Activated CD4-positive, alpha-beta T cell treated with anti-CD3 and anti-CD28 coated beads, Interleukin-2, amount 10 ng/mL, durations not matched to agents 24 days and 14 days (primary cell): ENCODE measurements at regions of chr4 and their contacts with region 1.

Region 1: DNA sequence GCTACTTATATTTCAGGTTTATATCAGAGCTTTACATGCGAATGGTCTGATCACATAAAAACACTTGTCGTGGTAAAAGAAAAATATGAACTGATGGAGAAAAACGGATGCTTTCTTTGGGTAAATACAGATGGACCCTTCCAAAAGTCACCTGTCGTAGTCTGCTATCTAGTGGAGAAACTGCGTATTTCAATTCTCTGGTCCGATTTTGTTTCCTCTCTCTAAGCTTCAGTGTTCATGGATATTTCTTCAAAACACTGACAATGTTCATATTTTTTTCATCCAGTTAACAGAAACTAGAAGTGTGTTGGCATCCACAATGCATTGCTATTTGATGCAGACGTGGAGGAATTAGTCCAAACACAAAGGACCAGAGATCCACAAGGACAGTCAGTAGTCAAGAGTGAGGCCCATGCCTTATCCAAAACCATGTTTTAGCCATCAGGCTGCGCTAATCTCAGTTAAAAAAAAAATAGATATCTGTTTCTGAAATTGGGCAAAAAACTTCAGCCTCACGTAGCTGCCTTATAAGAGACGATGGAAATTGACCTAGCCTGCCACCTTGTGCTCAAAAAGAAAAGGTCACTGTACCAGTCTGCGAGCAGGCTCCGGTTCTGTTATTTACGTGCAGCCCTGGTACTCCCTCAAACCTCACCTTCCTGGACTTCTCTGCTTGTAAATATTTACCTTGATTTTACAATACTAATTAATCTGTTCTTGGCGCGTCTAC is 16.0 kb downstream of the MEPE start:
- DNase-seq: peak; percentile 79
- H3K4me3 Mint-ChIP-seq: peak overlapping the region; percentile 7
- H3K27ac Mint-ChIP-seq: no peak overlapping the region
- H3K4me1 Mint-ChIP-seq: peaks cover 8% of the 10 kb centered on the region
- H3K27me3 Mint-ChIP-seq: peaks cover 21% of the 10 kb centered on the region

Region 2: GRCh38 chr4:87375719-87376291 is 473.0 kb before region 1 on chr4:
- intact Hi-C with region 1: loop called (anchors 10 kb)
- DNase-seq: peak; percentile 62
- H3K4me3 Mint-ChIP-seq: no peak overlapping the region
- H3K27ac Mint-ChIP-seq: no peak overlapping the region
- H3K4me1 Mint-ChIP-seq: no peaks in the 10 kb centered on the region
- H3K27me3 Mint-ChIP-seq: no peaks in the 10 kb centered on the region

Region 3: DNA sequence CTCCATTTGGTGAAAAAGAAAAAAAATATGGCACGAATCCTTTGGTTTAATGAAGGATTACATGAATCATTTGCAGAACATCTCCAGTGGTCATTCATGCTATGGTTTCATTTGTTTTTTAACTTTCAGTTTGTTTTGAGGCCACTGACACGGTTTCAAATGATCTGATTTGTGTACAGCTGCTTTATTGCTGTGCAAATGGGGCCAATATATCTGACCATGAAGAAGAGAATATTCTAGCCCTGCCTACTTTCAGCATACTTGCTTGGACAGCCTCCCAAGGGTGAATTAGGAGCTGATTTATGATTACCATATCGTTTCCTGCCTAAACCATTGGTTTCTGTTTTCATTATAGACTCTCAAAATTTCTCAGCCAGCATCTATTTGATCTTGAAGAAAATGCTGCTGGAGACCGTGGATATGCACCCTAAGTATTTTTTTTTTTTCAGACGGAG is 350.3 kb before region 1 on chr4:
- intact Hi-C with region 1: loop called (anchors 5 kb)
- DNase-seq: no peak
- H3K4me3 Mint-ChIP-seq: no peak overlapping the region
- H3K27ac Mint-ChIP-seq: no peak overlapping the region
- H3K4me1 Mint-ChIP-seq: peaks cover 8% of the 10 kb centered on the region
- H3K27me3 Mint-ChIP-seq: peaks cover 6% of the 10 kb centered on the region

Region 4: GRCh38 chr4:87679449-87680169 is 169.2 kb before region 1 on chr4:
- intact Hi-C with region 1: loop called (anchors 2 kb)
- DNase-seq: peak; percentile 64
- H3K4me3 Mint-ChIP-seq: no peak overlapping the region
- H3K27ac Mint-ChIP-seq: no peak overlapping the region
- H3K4me1 Mint-ChIP-seq: no peaks in the 10 kb centered on the region
- H3K27me3 Mint-ChIP-seq: no peaks in the 10 kb centered on the region

Region 5: GRCh38 chr4:87716371-87717265 is 132.2 kb before region 1 on chr4:
- intact Hi-C with region 1: no loop called
- DNase-seq: no peak
- H3K4me3 Mint-ChIP-seq: no peak overlapping the region
- H3K27ac Mint-ChIP-seq: no peak overlapping the region
- H3K4me1 Mint-ChIP-seq: no peaks in the 10 kb centered on the region
- H3K27me3 Mint-ChIP-seq: peaks cover 1% of the 10 kb centered on the region

Region 6: DNA sequence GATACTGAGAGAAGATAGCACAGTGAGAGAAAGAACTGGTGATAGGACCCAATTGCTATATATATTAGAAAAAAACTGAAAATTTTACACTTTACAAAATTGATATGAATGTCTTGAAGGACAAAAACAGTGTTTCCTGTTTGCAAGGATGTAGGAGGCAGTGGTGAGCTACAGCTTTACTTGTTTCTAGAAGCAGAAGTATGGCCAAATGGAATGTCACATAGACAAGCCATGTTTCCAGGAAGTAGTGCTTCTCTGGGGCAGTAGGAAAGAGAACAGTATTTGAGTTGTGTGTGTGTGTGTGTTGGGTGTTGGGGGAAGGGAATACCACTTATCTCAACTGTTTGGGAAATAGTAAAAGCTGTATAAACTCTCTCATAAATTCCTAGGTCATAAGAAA is 110.3 kb before region 1 on chr4:
- intact Hi-C with region 1: no loop called
- DNase-seq: no peak
- H3K4me3 Mint-ChIP-seq: no peak overlapping the region
- H3K27ac Mint-ChIP-seq: no peak overlapping the region
- H3K4me1 Mint-ChIP-seq: no peaks in the 10 kb centered on the region
- H3K27me3 Mint-ChIP-seq: no peaks in the 10 kb centered on the region

Region 7: GRCh38 chr4:87973283-87974169 is 124.7 kb after region 1 on chr4:
- intact Hi-C with region 1: loop called (anchors 1 kb)
- DNase-seq: peak; percentile 77
- H3K4me3 Mint-ChIP-seq: no peak overlapping the region
- H3K27ac Mint-ChIP-seq: no peak overlapping the region
- H3K4me1 Mint-ChIP-seq: peaks cover 4% of the 10 kb centered on the region
- H3K27me3 Mint-ChIP-seq: peaks cover 49% of the 10 kb centered on the region

Region 8: GRCh38 chr4:88211473-88212252 is 362.9 kb after region 1 on chr4:
- intact Hi-C with region 1: loop called (anchors 1 kb)
- DNase-seq: peak; percentile 89
- H3K4me3 Mint-ChIP-seq: no peak overlapping the region
- H3K27ac Mint-ChIP-seq: no peak overlapping the region
- H3K4me1 Mint-ChIP-seq: peaks cover 5% of the 10 kb centered on the region
- H3K27me3 Mint-ChIP-seq: peaks cover 13% of the 10 kb centered on the region

Region 9: DNA sequence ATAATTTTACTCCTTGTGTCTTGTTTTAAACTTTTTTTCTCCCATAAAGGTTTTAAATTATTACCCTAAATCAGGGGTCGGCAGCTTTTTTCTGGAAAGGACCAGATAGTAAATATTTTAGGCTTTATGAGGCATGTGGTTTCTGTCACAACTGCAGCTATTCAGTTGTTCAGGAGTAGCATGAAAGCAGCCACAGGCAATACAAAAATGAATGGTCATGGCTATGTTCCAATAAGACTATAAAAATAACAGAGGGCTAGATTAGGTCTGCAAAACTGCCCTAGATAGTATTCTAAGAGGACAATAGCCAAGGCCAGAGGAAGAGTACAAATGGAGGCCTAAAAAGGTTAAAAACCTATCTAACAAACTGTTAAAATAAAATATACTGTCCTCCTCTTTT is 632.8 kb after region 1 on chr4:
- intact Hi-C with region 1: no loop called
- DNase-seq: no peak
- H3K4me3 Mint-ChIP-seq: no peak overlapping the region
- H3K27ac Mint-ChIP-seq: no peak overlapping the region
- H3K4me1 Mint-ChIP-seq: no peaks in the 10 kb centered on the region
- H3K27me3 Mint-ChIP-seq: no peaks in the 10 kb centered on the region

Region 10: GRCh38 chr4:88514557-88515511 is 666.0 kb after region 1 on chr4:
- intact Hi-C with region 1: loop called (anchors 10 kb)
- DNase-seq: no peak
- H3K4me3 Mint-ChIP-seq: no peak overlapping the region
- H3K27ac Mint-ChIP-seq: no peak overlapping the region
- H3K4me1 Mint-ChIP-seq: peaks cover 3% of the 10 kb centered on the region
- H3K27me3 Mint-ChIP-seq: peaks cover 2% of the 10 kb centered on the region

Region 11: DNA sequence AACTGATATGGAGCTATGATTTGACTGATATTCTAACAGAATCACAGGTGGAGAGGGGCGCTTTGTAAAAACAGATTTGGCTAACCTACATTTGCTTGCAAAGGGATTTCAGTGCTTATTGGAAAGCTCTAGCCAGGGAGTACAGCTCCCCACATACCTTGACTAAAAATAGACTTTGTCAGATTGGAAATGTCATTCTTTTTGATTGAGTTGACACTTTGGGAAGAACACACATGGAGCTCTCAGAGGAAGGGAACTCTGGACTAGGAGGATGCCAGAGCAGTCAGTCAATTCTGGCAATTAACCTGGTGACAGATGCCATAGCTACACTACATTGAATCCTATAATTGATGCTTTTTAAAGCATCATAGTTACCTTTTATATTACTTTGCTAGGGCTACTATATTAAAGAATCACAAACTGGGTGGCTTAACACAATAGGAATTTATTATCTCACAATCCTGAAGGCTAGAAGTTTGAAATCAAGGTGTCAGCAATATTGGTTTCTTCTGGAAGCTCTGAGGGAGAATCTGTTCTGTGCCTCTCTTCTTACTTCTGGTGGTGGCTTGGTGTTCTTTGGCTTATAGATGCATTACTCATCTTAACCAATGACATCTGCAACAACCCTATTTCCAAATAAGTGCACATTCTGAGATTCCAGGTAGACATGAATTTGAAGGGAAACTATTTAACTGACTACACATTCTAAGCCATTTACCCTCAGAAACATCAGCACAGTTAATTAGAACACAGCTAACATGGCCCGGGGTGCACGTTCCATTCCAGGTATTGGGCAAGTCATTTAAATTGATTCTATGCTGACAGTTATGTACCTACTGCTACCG is 735.1 kb after region 1 on chr4:
- intact Hi-C with region 1: no loop called
- DNase-seq: no peak
- H3K4me3 Mint-ChIP-seq: no peak overlapping the region
- H3K27ac Mint-ChIP-seq: no peak overlapping the region
- H3K4me1 Mint-ChIP-seq: no peaks in the 10 kb centered on the region
- H3K27me3 Mint-ChIP-seq: peaks cover 14% of the 10 kb centered on the region